CD4-positive, alpha-beta T cell (primary cell): ENCODE measurements at regions of chr9 and their contacts with region 1.

Region 1: GRCh38 chr9:95494416-95495371 is 22.1 kb downstream of the PTCH1 start:
- DNase-seq: peak; percentile 75 to 94 (median 84)
- ATAC-seq: peak; percentile 94
- H3K4me3 ChIP-seq: peak overlapping the region; percentile 41
- H3K4me3 Mint-ChIP-seq: peak overlapping the region; percentile 88
- H3K27ac ChIP-seq: peak overlapping the region; percentile 49 to 65
- H3K27ac Mint-ChIP-seq: peak overlapping the region; percentile 98
- H3K4me1 ChIP-seq: peaks cover 59% of the 10 kb centered on the region
- H3K4me1 Mint-ChIP-seq: peaks cover 78% of the 10 kb centered on the region
- H3K27me3 ChIP-seq: peaks cover 0 to 4% of the 10 kb centered on the region in 2 experiments
- H3K27me3 Mint-ChIP-seq: peaks cover 7% of the 10 kb centered on the region
- CTCF ChIP-seq: no peak

Region 2: DNA sequence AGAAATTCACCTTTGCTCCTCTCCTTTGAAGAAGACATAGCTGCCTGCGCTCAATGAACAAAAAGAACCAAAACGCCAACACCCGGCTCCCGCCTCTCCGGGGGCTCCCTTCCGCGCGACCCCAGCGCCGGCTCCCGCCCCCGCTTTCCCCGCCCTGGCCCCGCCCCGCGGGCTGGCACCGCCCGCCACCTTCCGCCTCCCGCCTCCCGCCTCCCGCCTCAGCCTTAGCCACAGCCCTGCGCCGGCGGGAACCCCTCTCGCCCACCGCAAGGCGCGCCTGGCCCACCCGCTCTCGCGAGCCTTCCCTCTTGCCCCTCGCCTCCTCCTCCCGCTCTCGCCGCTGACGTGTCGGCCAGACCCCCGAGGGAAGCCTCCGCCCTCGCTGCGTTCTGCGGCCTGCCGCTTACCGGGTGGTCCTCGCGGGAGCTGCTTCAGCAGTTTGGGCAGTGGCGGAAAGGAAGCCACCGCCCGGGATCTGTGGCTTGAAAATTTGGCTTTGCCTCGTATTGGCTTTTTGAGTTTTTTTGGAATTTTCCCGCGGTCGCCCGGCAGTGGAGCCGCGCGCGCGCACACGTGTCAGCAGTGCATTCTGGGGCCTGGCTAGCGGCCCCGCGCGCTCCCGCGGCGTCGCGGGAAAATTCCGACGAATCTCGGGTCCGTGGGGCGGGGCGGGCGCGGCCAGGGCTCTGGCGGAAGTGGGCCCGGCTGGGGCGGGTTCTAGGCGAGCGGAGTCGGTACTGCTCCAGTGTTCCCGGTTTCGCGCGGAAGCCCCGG is 177.4 kb before region 1 on chr9 and contains the start of gene FANCC:
- CTCF ChIA-PET with region 1: interaction called, 3 read pairs
- POLR2A ChIA-PET with region 1: no interaction called
- intact Hi-C with region 1: loop called in 1 of 2 experiments (anchors 5 kb)
- DNase-seq: peak; percentile 65 to 92 (median 82)
- ATAC-seq: peak; percentile 88
- H3K4me3 ChIP-seq: peak within 1 kb of the TSS; percentile 96
- H3K4me3 Mint-ChIP-seq: peak within 1 kb of the TSS; percentile 96
- H3K27ac ChIP-seq: peak within 1 kb of the TSS; percentile 37 to 42
- H3K27ac Mint-ChIP-seq: peak within 1 kb of the TSS; percentile 86
- H3K4me1 ChIP-seq: peaks cover 14% of the 10 kb centered on the region
- H3K4me1 Mint-ChIP-seq: peaks cover 27% of the 10 kb centered on the region
- H3K27me3 ChIP-seq: no peaks in the 10 kb centered on the region
- H3K27me3 Mint-ChIP-seq: peaks cover 9% of the 10 kb centered on the region
- CTCF ChIP-seq: no peak
- total RNA-seq, gene FANCC: 5.7 to 6.3 TPM

Region 3: DNA sequence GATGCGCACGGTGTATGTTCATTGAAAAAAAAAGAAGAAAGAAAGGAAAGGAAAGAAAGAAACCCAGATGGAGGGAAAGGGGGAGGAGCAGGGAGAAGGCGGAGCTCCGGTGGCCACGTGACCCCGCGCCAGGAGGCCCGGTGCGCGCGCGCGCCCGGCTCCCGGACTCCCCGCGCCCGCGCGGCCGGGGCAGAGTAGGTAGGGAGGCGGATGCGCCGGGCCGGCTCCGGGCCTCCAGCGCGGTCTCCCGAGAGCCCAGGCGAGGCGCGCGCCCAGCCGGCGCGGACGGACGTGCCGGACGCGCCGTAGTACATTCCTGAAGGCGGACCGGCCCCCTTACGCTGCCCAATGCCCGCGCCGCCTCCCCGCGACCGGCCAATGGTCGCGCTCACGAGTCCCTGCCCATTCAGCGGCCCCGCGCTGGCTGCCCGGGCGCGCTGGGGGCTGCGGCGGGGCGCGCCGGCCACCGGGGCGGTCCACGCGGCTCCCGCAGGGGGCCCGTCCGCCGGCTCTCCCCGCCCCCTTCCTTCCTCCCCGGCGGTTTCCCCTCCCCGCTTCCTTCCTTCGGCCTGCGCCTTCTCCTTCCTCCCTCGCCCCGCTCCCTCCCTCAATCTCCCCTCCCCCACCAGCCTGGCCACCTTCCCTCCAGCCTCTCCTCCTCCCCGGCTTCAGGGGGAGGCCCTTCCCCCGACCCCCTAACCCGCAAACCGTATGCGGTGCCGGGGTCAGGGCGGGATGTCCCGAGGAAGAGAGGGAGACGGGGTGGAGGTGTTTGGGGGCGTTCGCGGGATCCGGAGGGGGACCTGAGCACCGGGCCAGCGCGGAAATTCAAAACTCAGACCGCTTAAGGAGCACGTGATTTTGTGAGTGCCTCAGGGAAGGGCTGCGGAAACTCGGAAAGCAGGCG is 16.3 kb after region 1 on chr9:
- CTCF ChIA-PET with region 1: interaction called, 3 read pairs
- POLR2A ChIA-PET with region 1: interaction called, 99 read pairs
- intact Hi-C with region 1: loop called (anchors 1 kb)
- DNase-seq: peak; percentile 59 to 92 (median 82)
- ATAC-seq: peak; percentile 54
- H3K4me3 ChIP-seq: peak overlapping the region; percentile 73
- H3K4me3 Mint-ChIP-seq: peak overlapping the region; percentile 93
- H3K27ac ChIP-seq: no peak overlapping the region
- H3K27ac Mint-ChIP-seq: peak overlapping the region; percentile 83
- H3K4me1 ChIP-seq: peaks cover 56% of the 10 kb centered on the region
- H3K4me1 Mint-ChIP-seq: peaks cover 53% of the 10 kb centered on the region
- H3K27me3 ChIP-seq: peaks cover 11 to 15% of the 10 kb centered on the region in 2 experiments
- H3K27me3 Mint-ChIP-seq: peaks cover 15% of the 10 kb centered on the region
- CTCF ChIP-seq: no peak

Region 4: DNA sequence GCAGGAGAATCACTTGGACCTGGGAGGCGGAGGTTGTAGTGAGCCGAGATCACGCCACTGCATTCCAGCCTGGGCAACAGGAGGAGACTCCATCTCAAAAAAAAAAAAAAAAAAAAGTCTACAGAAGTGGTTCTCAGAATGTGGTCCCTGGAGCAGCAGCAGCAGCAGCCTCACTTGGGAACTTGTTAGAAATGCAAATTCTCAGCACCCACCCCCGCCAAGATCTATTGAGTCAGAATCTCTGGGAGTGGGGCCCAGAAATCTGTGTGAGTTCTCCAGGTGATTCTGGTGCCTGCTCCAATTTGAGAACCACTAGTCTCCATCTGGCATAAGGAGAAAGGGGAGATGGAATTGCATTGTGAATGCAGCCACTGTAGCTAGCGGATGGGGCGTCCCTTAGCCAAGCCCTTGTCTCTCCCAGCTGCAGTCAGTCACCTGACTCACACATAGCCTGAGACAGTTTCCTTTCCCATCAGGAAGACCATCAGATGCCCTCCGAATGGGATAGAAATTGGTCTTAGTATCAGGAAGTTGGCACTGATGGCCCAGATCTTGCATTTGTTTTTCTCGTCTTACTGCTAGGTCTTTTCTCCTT is 34.3 kb after region 1 on chr9:
- CTCF ChIA-PET with region 1: no interaction called
- POLR2A ChIA-PET with region 1: no interaction called
- intact Hi-C with region 1: no loop called
- DNase-seq: no peak
- ATAC-seq: no peak
- H3K4me3 ChIP-seq: no peak overlapping the region
- H3K4me3 Mint-ChIP-seq: no peak overlapping the region
- H3K27ac ChIP-seq: no peak overlapping the region
- H3K27ac Mint-ChIP-seq: no peak overlapping the region
- H3K4me1 ChIP-seq: no peaks in the 10 kb centered on the region
- H3K4me1 Mint-ChIP-seq: no peaks in the 10 kb centered on the region
- H3K27me3 ChIP-seq: peaks cover 5 to 6% of the 10 kb centered on the region in 2 experiments
- H3K27me3 Mint-ChIP-seq: peaks cover 22% of the 10 kb centered on the region
- CTCF ChIP-seq: no peak

Region 5: DNA sequence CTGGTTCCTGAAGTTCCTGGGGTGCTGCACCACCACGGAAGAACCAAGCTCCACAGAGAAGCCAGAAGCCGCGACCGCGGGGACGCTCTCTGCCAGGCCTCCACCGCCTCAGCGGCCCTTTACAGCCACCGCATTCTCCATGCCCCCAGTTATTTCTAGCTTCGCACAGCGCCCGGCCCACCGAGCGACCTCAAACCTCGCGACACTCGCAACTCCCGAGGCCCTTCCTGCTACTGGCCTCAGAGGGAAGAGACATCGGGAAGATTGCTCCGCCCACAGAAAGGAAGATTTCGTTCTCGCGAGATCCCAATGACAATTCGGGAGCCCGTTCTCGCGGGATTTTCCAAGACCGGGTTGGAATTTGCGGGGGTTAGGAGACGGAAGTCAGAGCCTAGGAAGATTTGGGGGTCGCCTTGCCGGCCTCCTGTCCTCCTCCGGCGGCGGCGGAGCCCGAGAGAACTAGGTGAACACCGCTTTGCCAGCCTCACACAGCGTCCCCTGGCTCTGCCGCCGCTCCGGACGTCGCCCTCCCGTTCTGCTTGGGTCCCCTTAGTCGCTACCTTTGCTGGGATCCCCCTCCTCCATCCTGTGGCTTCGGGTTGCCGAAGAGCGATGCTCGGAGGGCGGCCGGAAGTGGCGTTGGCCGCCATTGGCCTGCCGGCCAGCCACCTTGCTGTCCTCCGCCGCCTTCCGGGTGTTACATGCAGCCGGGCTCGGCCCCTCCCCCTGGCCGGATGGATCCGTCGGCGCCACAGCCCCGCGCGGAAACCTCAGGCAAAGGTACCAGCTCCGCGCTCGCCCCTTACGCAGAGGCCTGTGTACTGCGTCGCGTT is 380.8 kb after region 1 on chr9 and contains the start of gene ERCC6L2:
- CTCF ChIA-PET with region 1: no interaction called
- POLR2A ChIA-PET with region 1: interaction called, 17 read pairs
- intact Hi-C with region 1: loop called in 1 of 2 experiments (anchors 1 kb)
- DNase-seq: peak; percentile 85 to 96 (median 90)
- ATAC-seq: peak; percentile 77
- H3K4me3 ChIP-seq: no peak within 1 kb of the TSS
- H3K4me3 Mint-ChIP-seq: no peak within 1 kb of the TSS
- H3K27ac ChIP-seq: no peak within 1 kb of the TSS
- H3K27ac Mint-ChIP-seq: no peak within 1 kb of the TSS
- H3K4me1 ChIP-seq: peaks cover 20% of the 10 kb centered on the region
- H3K4me1 Mint-ChIP-seq: peaks cover 32% of the 10 kb centered on the region
- H3K27me3 ChIP-seq: no peaks in the 10 kb centered on the region
- H3K27me3 Mint-ChIP-seq: no peaks in the 10 kb centered on the region
- CTCF ChIP-seq: no peak
- total RNA-seq, gene ERCC6L2: 30.8 to 31.3 TPM

Region 6: DNA sequence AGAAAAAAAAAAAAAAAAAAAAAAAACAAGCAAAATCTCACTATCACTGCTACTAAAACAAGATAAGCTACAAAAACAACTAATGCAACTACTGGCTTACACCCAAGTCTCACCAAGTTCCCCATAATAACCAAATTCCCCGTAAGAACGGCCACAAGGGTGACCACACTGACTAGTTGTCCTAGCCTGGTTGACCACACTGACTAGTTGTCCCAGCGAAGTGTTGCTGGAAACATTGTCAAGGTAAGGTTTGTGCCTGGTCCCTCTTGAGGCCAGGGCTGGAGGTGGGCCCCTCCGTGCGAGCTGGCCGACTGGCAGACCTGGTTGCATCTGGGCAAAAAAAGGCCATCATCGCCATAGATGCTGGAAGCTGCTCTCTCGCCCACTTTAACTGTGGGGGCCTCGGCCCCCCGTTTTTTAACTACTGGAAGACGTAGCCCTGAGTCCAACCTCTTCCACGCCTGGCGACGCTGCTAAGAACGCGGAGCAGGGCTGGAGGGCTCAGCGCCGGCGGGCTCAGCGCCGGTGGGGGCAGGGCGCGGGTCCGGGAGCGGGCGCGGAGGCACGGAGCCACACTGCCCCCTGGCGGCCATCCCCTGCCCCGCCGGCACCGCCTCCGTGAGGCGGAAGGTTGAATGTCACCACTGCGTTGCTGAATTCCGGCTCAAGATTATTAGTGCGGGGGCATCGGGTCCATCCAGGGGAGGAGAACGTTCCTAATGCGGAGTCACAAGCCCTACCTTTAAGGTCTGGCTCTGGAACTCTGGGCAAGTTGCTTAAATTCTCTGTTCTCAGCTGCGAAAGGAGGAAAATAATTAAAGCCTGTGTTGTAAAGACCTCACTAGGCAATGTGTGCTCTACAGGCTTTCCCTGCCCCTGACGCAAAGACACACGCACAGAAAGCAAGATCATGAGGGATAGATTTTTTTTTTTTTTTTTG is 723.3 kb after region 1 on chr9:
- CTCF ChIA-PET with region 1: no interaction called
- POLR2A ChIA-PET with region 1: no interaction called
- intact Hi-C with region 1: loop called (anchors 5 to 10 kb)
- DNase-seq: peak; percentile 42 to 85 (median 66)
- ATAC-seq: peak; percentile 89
- H3K4me3 ChIP-seq: peak overlapping the region; percentile 28
- H3K4me3 Mint-ChIP-seq: peak overlapping the region; percentile 79
- H3K27ac ChIP-seq: no peak overlapping the region
- H3K27ac Mint-ChIP-seq: no peak overlapping the region
- H3K4me1 ChIP-seq: peaks cover 20% of the 10 kb centered on the region
- H3K4me1 Mint-ChIP-seq: peaks cover 9% of the 10 kb centered on the region
- H3K27me3 ChIP-seq: peaks cover 26 to 31% of the 10 kb centered on the region in 2 experiments
- H3K27me3 Mint-ChIP-seq: peaks cover 73% of the 10 kb centered on the region
- CTCF ChIP-seq: peak; percentile 94